ENCODE measurements at regions of chr17 and their contacts with region 1.

Region 1: GRCh38 chr17:53538129-53538615 is 284.6 kb upstream of the KIF2B start:
- DNase-seq: no peak
- ATAC-seq: no peak
- H3K4me3 ChIP-seq: no peak overlapping the region
- H3K27ac ChIP-seq: no peak overlapping the region
- H3K4me1 ChIP-seq: no peaks in the 10 kb centered on the region
- H3K27me3 ChIP-seq: no peaks in the 10 kb centered on the region
- CTCF ChIP-seq: no peak
- POLR2A ChIP-seq: no peak

Region 2: GRCh38 chr17:53588317-53588716 is 50.1 kb after region 1 on chr17:
- intact Hi-C with region 1: loop called in 1 of 10 experiments (anchors 5 kb)
- DNase-seq: no peak
- ATAC-seq: no peak
- H3K4me3 ChIP-seq: no peak overlapping the region
- H3K27ac ChIP-seq: no peak overlapping the region
- H3K4me1 ChIP-seq: no peaks in the 10 kb centered on the region
- H3K27me3 ChIP-seq: no peaks in the 10 kb centered on the region
- CTCF ChIP-seq: no peak
- POLR2A ChIP-seq: no peak

Measured in heart left ventricle (tissue), 16 donors.